PC-3 (cell line): ENCODE measurements at regions of chr3 and their contacts with region 1.

Region 1: GRCh38 chr3:78076379-78076778 is 1036.5 kb downstream of the ROBO2 start:
- DNase-seq: no peak
- ATAC-seq: no peak
- H3K4me3 ChIP-seq: no peak overlapping the region
- H3K27ac ChIP-seq: no peak overlapping the region
- H3K4me1 ChIP-seq: peaks cover 30% of the 10 kb centered on the region
- H3K27me3 ChIP-seq: no peaks in the 10 kb centered on the region
- CTCF ChIP-seq: no peak

Region 2: GRCh38 chr3:77320514-77320913 is 755.9 kb before region 1 on chr3:
- CTCF ChIA-PET with region 1: no interaction called
- POLR2A ChIA-PET with region 1: no interaction called
- intact Hi-C with region 1: loop called (anchors 10 kb)
- DNase-seq: peak; percentile 69
- ATAC-seq: no peak
- H3K4me3 ChIP-seq: no peak overlapping the region
- H3K27ac ChIP-seq: no peak overlapping the region
- H3K4me1 ChIP-seq: peaks cover 11% of the 10 kb centered on the region
- H3K27me3 ChIP-seq: peaks cover 6% of the 10 kb centered on the region
- CTCF ChIP-seq: peak; percentile 75

Region 3: GRCh38 chr3:77825001-77825827 is 251.2 kb before region 1 on chr3:
- CTCF ChIA-PET with region 1: no interaction called
- POLR2A ChIA-PET with region 1: no interaction called
- intact Hi-C with region 1: loop called (anchors 1 kb)
- DNase-seq: peak; percentile 99
- ATAC-seq: peak; percentile 92
- H3K4me3 ChIP-seq: no peak overlapping the region
- H3K27ac ChIP-seq: peak overlapping the region; percentile 92
- H3K4me1 ChIP-seq: peaks cover 34% of the 10 kb centered on the region
- H3K27me3 ChIP-seq: no peaks in the 10 kb centered on the region
- CTCF ChIP-seq: 0 out of 2 replicates have a peak, but pooled peaks have one; percentile 20

Region 4: DNA sequence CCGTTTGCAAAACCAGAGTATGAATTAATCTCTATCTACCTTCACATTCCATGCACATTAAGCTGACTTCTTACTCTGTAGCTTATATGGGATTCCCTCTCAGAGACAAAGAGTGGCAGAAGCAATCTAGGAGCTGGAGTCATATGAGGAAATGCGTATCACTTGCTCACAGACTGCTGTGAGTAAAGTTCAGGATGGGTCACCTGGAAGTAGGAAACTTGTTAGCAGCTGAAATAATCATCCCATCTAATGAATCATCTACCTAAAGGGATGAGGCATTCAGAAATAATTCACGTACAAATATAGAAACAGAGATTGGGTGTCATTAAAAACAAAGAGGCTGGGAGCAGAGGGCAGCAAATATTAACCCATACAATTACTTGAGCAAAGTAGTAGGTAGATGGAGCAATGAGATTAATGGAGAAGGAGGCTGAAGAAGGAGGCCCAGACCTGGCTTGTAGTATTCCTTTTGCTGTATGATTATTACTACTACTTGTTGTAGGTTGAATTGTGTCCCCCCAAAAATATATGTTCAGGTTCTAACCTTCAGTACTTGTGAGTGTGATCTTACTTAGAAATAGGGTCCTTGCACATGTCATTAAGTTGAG is 170.2 kb before region 1 on chr3:
- CTCF ChIA-PET with region 1: no interaction called
- POLR2A ChIA-PET with region 1: no interaction called
- intact Hi-C with region 1: loop called (anchors 1 kb)
- DNase-seq: peak; percentile 96
- ATAC-seq: peak; percentile 95
- H3K4me3 ChIP-seq: no peak overlapping the region
- H3K27ac ChIP-seq: peak overlapping the region; percentile 95
- H3K4me1 ChIP-seq: peaks cover 24% of the 10 kb centered on the region
- H3K27me3 ChIP-seq: no peaks in the 10 kb centered on the region
- CTCF ChIP-seq: no peak; the same call in 1 of the 2 replicates

Region 5: DNA sequence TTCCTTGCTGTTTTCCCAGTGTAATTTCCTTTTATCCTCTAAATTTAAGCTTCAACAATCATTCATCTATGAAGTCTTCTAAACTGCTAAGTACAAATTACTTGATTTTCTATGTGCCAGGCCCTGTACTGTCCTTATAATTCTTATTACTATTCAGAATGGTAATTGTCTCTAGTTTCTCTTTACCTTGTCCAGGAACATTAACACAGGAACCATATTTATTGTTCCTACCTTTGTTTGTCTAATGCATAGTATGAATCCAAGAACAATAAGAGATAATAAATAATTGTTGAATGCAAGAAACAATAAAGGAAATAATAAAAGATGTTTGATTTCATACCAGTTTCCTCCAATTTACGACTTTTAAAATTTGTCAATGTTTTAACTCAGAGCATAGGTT is 46.7 kb after region 1 on chr3:
- CTCF ChIA-PET with region 1: no interaction called
- POLR2A ChIA-PET with region 1: no interaction called
- intact Hi-C with region 1: loop called (anchors 2 kb)
- DNase-seq: no peak
- ATAC-seq: peak; percentile 74
- H3K4me3 ChIP-seq: no peak overlapping the region
- H3K27ac ChIP-seq: no peak overlapping the region
- H3K4me1 ChIP-seq: no peaks in the 10 kb centered on the region
- H3K27me3 ChIP-seq: no peaks in the 10 kb centered on the region
- CTCF ChIP-seq: no peak

Region 6: DNA sequence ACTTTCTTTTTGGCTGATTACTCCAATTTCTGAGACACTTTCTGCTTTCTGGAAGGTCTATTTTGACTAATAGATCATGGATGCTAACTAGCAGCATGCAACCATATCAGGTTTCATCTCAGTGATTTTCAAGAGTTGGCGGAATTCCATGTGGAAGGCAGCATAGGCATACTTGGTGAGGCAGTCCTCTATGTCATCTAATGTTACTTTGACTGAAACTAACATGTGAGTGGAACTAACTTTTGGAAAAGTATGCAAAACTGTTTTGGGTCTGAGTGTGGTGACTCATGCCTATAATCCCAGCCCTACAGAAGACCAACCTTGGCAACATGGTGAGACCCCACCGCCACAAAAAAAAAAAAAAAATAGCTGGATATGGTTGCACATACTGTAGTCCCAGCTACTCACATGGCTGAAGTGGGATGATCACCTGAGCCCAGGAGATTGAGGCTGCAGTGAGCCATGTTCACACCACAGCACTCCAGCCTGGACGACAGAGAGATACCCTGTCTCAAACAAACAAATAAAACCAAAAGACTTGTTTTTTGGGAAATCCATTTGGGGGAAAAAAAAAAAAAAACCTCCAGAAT is 657.8 kb after region 1 on chr3:
- CTCF ChIA-PET with region 1: no interaction called
- POLR2A ChIA-PET with region 1: no interaction called
- intact Hi-C with region 1: no loop called
- DNase-seq: peak; percentile 61
- ATAC-seq: peak; percentile 51
- H3K4me3 ChIP-seq: no peak overlapping the region
- H3K27ac ChIP-seq: no peak overlapping the region
- H3K4me1 ChIP-seq: no peaks in the 10 kb centered on the region
- H3K27me3 ChIP-seq: no peaks in the 10 kb centered on the region
- CTCF ChIP-seq: no peak